ENCODE measurements at regions of chr12 and their contacts with region 1.

Region 1: GRCh38 chr12:48969833-48970701 is 1.5 kb downstream of the WNT10B start:
- DNase-seq: no peak

Region 2: DNA sequence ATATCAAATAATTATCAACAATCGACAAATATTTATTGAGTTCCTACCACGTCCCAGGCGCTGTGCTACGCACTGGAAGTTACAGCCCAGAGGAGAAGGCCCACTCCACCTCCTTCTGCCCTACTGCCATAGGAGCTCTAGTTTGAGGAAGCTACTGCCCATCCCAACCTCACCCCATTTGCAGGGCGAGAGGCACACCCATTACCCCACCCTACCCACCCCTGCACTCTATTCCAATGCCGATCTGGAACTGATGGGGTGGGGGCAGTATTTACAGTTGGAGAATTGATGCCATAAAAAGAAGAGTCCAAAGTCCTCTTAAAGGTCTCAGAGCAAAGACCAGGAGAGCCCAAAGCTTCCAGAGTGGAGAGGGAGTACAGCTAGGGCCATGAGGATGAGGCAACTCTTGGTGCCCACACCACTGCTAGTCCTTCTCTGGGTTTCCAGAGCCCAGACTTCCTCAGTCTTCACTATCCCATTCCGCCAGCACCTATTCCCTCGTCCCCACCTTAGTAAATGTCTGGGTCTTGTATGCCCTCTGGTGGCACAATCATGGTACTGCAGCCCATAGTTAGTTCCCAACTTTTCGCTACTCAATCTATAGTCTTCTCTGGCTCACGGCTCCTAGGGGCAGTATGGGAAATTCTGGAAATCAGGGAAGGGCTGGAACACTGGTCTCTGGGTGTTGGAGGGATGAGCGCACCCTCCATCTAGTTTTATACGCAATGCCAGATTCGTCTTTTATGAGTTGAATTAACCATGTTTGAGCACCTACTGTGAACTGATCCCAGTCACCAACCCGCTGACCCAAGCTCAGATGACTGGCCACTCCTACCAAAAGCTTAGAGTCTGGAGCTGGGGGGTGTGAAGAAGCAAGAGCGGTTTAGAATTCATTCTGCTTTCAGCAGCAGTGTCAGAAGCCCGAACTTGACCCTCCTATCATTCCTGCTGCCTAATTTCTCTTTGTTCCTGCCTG is 174.3 kb before region 1 on chr12:
- CTCF ChIA-PET with region 1: no interaction called
- POLR2A ChIA-PET with region 1: no interaction called
- DNase-seq: peak; percentile 85

Region 3: GRCh38 chr12:48923117-48923516 is 47.0 kb before region 1 on chr12:
- CTCF ChIA-PET with region 1: no interaction called
- POLR2A ChIA-PET with region 1: no interaction called
- DNase-seq: no peak

Region 4: DNA sequence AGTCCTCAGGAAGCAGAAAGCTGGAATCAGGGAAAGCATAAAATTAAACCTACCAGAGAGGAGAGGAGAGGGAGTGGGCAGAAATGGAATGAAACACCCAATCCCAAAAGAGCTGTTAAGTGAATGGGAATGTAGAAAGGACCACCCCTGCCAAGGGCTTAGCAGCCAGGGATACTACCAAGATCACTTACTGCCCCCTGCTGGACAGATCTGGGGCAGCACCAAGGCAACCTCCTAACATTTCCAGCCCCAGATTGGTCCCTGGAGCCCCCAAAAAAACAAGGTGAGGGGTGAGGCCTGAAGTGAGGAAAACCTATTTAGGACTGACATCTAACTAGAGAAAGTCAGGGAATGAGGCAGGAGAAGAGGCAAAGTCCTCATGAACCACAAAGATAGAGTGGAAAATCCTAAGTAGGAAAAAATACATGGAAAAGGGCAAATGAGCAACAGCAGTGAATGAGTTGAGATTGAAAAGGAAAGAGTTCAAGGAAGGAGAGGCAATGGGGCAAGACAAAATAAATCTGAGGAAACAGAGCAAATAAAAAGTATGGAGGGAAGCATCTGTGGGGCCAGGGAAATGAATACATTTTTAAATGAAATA is 33.6 kb before region 1 on chr12:
- CTCF ChIA-PET with region 1: interaction called, 10 read pairs
- POLR2A ChIA-PET with region 1: interaction called, 3 read pairs
- DNase-seq: peak; percentile 90

Region 5: GRCh38 chr12:48957141-48958048 is 12.7 kb before region 1 on chr12 and contains the start of gene ARF3:
- CTCF ChIA-PET with region 1: interaction called, 3 read pairs
- POLR2A ChIA-PET with region 1: interaction called, 17 read pairs
- DNase-seq: peak; percentile 98

Region 6: DNA sequence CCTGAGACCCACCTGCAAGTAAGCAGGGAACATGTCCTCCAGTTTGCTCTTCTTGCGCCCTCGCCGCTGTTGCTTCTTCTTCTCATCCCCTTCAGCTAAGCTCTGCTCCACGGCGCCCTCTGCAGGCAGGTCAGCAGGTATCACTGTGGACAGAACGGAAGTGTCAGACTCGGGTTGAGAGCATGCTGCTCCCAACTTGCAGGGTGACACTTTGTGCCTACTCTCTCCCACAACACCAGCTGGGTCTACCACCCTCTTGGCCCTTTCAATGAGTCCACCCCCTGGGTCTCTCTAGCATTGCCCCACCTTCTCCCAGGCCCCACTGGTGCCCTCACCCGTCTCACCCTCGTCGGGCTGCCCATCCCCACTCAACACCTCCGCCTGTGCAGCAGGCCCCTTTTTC is 73.8 kb after region 1 on chr12:
- CTCF ChIA-PET with region 1: no interaction called
- POLR2A ChIA-PET with region 1: no interaction called
- DNase-seq: peak; percentile 84

Region 7: DNA sequence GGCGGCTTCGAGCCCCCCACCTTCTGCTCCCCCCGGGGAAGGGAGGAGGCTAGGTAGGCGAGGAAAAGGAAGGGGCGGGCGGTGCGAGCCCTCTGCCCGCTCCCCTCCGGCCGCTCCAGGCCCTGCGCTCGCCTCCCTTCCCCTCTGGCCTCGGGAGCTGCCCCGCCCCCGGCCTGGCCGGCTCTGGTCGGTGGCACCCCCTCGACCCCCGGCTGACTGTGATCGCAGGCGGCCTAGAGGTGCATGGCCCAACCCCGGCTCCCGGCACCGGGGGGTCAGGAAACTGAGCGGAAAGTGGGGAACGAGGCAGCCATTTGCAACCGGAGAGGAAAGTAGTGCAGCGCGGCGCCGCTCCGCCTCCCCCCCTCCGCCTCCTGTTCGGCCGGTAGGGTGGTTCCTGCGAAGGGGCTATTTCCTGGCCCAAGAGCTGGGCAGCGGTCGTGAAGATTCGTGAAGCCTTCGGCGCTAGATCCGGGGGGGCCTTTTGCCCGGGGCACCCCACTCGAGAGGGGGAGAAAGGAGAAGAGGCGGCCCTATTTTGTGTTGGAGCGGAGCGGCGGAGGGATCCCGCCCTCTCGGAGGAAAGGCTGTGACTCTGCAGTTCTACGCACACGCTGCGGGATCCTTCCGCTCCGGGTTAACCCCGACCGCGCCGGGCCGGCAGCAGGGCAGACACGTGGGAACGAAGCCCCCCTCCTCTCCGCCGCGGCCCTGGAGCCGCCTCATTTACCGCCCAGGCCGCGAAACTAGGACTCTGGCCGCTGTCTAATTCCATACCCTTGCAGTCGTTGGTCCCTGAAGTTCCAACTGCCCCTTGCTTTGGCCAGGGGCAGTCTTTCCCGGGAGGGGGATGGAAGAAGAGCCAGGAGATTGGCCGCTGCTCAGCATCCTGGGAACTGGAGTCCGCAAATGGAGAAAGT is 90.4 kb after region 1 on chr12 and contains the start of gene KMT2D:
- CTCF ChIA-PET with region 1: no interaction called
- POLR2A ChIA-PET with region 1: no interaction called
- DNase-seq: peak; percentile 87